Endothelial cell of umbilical vein (primary cell): ENCODE measurements at regions of chr1 and their contacts with region 1.

Region 1: DNA sequence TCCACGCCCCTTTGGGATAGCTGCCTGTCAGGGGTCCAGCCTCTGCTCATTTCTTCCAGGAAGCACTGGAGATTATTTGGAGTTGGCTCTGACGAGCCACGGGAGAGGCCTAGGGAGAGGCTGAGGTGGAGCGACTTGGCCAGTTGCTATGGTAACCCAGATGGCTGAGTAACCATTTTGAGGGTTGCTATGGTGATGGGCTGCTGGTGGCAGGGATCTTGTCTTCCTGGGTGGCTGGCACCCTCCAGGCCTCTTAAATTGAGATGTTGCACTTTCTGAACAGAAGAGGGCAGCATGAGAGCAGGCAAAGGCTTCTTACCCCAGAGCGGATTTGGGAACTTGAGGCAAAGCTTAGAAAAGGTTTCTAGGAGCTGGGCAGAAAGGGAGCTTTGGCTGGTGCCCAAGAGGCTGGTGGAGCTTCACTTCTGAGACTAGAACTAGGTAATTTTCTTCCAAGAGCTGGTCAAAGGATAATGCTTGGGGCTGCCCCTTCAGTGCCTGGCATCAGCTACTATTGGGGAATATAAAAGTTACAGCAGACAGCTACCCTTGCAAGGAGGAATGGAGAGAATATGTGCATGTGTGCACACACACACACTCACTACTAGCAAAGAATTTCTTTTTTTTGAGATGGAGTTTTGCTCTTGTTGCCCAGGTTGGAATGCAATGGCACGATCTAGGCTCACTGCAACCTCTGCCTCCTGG is 72.5 kb downstream of the NDUFS5 start:
- DNase-seq: peak; percentile 61
- H3K4me3 ChIP-seq: no peak overlapping the region
- H3K27ac ChIP-seq: no peak overlapping the region
- H3K4me1 ChIP-seq: peaks cover 12% of the 10 kb centered on the region
- H3K27me3 ChIP-seq: no peaks in the 10 kb centered on the region
- CTCF ChIP-seq: peak; percentile 65 to 68
- POLR2A ChIP-seq: no peak

Region 2: GRCh38 chr1:37989361-37989930 is 1109.3 kb before region 1 on chr1:
- CTCF ChIA-PET with region 1: no interaction called
- POLR2A ChIA-PET with region 1: no interaction called
- dilution Hi-C with region 1: no loop called
- intact Hi-C with region 1: no loop called
- DNase-seq: no peak
- H3K4me3 ChIP-seq: peak overlapping the region; percentile 78 to 81 (median 78)
- H3K27ac ChIP-seq: peak overlapping the region; percentile 24
- H3K4me1 ChIP-seq: peaks cover 9% of the 10 kb centered on the region
- H3K27me3 ChIP-seq: no peaks in the 10 kb centered on the region
- CTCF ChIP-seq: no peak
- POLR2A ChIP-seq: no peak

Region 3: GRCh38 chr1:38640371-38640770 is 458.3 kb before region 1 on chr1:
- CTCF ChIA-PET with region 1: no interaction called
- POLR2A ChIA-PET with region 1: no interaction called
- dilution Hi-C with region 1: no loop called
- intact Hi-C with region 1: no loop called
- DNase-seq: no peak
- H3K4me3 ChIP-seq: no peak overlapping the region
- H3K27ac ChIP-seq: no peak overlapping the region
- H3K4me1 ChIP-seq: no peaks in the 10 kb centered on the region
- H3K27me3 ChIP-seq: no peaks in the 10 kb centered on the region
- CTCF ChIP-seq: no peak
- POLR2A ChIP-seq: no peak

Region 4: DNA sequence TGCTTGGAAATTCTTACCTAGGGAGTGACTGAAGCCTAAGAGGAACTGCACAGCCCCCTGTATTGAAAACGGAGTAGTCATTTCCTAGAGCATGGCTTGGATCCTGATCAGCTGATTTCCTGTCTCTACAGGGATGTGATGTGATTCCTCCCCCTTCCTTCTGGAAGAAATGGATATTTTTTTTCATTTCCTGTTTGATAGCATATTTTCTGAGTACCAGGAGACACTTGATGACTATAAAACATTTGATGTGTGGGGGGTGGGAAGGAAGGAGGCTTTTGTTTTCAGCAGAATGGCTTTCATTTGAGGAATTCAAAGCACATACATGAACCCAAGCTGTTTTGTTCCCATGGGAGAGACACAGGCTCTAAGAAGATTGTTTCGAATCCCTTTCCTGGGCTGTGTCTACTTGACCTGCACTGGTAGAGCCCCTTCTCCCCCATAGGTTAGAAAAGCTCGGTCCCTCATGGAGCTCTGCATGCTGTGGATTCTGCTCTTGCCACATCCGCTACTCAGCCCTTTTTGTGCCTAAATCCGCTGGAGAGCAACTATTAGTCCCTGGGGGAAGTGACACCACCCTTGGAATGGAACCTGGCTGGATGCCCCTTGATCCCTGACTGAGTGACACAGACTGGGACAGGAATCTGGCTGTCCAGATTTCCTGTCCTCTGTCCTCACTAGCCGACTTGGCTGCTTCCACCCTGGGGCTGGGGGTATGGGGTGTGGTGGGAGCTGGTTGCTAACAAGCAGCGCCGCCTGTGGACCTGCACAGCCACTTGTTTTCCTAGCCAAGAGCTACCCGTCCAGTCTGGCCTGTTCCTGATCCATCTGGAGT is 34.0 kb after region 1 on chr1:
- CTCF ChIA-PET with region 1: interaction called, 35 read pairs
- POLR2A ChIA-PET with region 1: no interaction called
- dilution Hi-C with region 1: no loop called
- intact Hi-C with region 1: no loop called
- DNase-seq: peak; percentile 97
- H3K4me3 ChIP-seq: peak overlapping the region in 1 of 3 experiments; percentile 38
- H3K27ac ChIP-seq: peak overlapping the region; percentile 98
- H3K4me1 ChIP-seq: peaks cover 68% of the 10 kb centered on the region
- H3K27me3 ChIP-seq: no peaks in the 10 kb centered on the region
- CTCF ChIP-seq: peak; percentile 68 to 75
- POLR2A ChIP-seq: peak; percentile 32

Region 5: DNA sequence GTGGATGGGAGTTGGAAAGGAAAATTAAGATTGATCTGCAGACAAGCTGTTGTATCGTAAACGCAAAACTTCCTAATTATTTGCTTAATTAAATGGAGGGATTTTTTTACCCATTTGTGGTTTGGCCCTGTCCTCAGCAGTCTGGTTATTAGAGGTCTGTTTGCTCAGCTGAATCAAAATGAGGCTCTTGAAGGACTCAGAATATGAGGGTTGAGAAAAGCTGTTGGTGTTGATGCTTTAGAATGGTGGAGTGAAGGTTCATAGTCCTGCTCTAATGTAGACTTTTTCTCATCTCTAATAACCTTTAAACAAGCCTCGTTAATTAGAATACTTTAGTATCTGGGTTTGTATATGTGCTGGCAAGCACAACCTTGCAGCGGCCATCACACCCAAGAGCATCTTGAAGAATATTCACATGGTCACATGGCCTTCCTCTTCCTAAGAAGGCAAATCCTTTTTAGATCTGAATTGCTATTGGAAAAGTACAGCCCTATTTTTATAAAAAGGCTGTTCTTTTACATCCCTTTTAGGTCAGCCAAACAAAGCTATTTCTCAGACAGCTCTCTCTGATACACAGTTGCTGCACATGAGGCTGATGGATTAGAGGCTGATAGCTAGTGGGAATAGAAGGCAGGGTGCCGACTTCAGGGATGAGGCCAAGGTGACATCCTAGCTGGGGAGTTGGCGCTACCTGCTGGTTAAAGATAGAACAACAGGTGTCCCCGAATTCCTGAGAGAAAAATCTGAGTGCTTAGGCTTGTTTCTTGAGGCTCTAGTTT is 159.6 kb after region 1 on chr1:
- CTCF ChIA-PET with region 1: interaction called, 44 read pairs
- POLR2A ChIA-PET with region 1: no interaction called
- dilution Hi-C with region 1: no loop called
- intact Hi-C with region 1: loop called (anchors 1 kb)
- DNase-seq: peak; percentile 75
- H3K4me3 ChIP-seq: no peak overlapping the region
- H3K27ac ChIP-seq: no peak overlapping the region
- H3K4me1 ChIP-seq: no peaks in the 10 kb centered on the region
- H3K27me3 ChIP-seq: no peaks in the 10 kb centered on the region
- CTCF ChIP-seq: peak; percentile 70 to 71
- POLR2A ChIP-seq: no peak

Region 6: DNA sequence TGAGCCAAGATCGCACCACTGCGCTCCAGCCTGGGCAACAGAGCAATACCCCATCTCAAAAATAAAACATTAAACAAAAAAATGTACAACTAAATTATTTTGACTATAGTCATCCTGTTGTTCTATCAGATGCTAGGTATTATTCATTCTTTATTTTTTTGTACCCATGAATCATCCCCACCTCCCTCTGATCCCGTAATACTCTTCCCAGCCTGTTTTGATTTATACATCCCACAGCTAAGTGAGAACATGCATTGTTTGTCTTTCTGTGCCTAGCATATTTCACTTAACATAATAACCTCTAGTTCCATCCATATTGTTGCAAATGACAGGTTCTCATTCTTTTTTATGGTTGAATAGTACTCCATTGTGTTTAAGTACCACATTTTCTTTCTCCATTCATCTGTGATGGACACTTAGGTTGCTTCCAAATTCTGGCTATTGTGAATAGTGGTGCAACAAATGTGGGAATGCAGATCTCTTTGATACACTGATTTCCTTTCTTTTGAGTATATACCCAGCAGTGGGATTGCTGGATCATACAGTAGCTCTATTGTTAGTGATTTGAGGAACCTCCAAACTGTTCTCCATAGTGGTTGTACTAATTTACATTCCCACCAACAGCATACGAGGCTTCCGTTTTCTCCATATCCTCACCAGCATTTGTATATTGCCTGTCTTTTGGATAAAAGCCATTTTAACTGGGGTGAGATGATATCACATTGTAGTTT is 190.2 kb after region 1 on chr1:
- CTCF ChIA-PET with region 1: interaction called, 10 read pairs
- POLR2A ChIA-PET with region 1: no interaction called
- dilution Hi-C with region 1: no loop called
- intact Hi-C with region 1: no loop called
- DNase-seq: no peak
- H3K4me3 ChIP-seq: no peak overlapping the region
- H3K27ac ChIP-seq: no peak overlapping the region
- H3K4me1 ChIP-seq: no peaks in the 10 kb centered on the region
- H3K27me3 ChIP-seq: no peaks in the 10 kb centered on the region
- CTCF ChIP-seq: no peak
- POLR2A ChIP-seq: no peak

Region 7: DNA sequence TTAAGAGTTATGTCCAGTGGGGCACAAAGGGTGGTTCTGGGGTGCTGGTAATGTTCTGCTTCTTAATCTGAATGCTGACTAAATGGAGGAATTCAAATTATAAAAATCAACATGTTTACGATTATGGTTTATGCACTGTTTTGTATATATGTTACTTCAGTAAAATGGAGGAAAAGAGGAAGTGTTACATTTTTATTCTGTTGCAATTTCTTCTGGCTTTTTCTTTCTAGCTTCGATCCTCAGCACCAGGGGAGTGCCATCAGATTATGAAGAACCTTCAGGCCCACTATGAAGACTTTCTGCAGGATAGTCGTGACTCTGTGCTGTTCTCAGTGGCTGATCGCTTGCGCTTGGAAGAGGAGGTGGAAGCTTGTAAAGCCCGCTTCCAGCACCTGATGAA is 211.3 kb after region 1 on chr1:
- CTCF ChIA-PET with region 1: interaction called, 12 read pairs
- POLR2A ChIA-PET with region 1: no interaction called
- dilution Hi-C with region 1: no loop called
- intact Hi-C with region 1: no loop called
- DNase-seq: no peak
- H3K4me3 ChIP-seq: no peak overlapping the region
- H3K27ac ChIP-seq: no peak overlapping the region
- H3K4me1 ChIP-seq: no peaks in the 10 kb centered on the region
- H3K27me3 ChIP-seq: no peaks in the 10 kb centered on the region
- CTCF ChIP-seq: no peak
- POLR2A ChIP-seq: no peak

Region 8: DNA sequence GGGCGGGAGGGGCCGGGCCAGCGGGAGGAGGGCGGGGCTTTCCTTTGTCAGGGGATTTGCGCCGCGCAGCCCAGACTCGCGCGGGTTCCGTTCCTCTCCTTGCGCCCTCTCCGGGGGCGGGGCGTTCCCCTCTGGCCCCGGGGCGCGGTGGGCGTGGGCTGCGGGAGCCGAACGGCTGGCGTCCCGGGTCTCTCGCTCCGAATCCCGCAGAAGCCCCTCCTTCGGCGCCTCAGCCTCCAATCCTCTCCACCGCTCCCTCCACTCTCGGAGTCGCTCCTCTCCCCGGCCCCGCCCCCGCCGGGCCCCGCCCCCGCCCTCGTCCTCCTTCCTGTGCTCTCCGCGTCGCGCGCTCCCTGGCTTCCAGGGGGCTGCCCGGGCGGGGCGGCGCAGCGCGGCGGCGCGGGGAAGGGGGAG is 309.9 kb after region 1 on chr1:
- CTCF ChIA-PET with region 1: interaction called, 20 read pairs
- POLR2A ChIA-PET with region 1: no interaction called
- dilution Hi-C with region 1: no loop called
- intact Hi-C with region 1: loop called (anchors 2 kb)
- DNase-seq: peak; percentile 97
- H3K4me3 ChIP-seq: peak overlapping the region; percentile 67 to 97 (median 96)
- H3K27ac ChIP-seq: peak overlapping the region; percentile 79
- H3K4me1 ChIP-seq: peaks cover 54% of the 10 kb centered on the region
- H3K27me3 ChIP-seq: no peaks in the 10 kb centered on the region
- CTCF ChIP-seq: no peak
- POLR2A ChIP-seq: peak; percentile 4

Region 9: DNA sequence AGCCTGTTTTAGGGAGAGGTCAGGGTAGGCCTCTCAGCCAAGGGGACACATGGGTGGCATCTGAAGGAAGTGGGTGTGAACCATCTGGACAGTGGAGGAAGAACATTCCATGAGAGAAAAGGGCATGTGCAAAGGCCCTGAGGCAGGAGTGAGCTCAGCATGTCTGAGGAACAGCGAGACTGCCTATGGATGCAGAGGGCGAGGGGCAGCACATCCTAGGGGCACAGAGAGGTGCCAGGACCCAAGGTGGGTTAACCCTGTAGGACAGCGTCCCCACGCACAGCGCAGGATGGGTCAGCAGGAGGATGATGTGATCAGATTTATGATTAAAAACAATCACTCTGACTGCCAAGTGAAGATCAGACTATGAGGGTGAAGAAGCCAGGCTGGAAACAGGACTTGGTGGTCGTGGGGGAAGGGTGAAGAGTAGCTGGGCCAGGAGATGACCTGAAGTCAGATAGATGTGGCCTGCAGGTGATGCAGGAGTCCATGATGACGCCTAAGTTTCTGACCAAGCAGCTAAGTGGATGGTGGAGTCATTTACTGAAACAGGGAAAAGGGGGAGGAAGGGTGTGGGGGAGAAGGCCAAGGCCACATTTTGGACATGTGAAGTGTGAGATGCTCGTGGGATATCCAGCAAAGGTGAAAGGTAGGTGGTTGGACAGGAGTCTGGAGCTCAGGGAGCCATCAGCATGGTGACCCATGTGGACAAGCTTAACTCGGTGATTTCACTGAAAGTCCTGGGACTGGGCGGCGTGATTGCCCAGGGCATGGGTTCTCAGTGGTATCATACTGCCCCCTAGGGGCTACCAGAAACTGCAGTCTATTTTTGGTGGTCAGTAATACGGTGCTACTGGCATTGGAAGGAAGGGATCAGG is 440.1 kb after region 1 on chr1:
- CTCF ChIA-PET with region 1: interaction called, 99 read pairs
- POLR2A ChIA-PET with region 1: no interaction called
- dilution Hi-C with region 1: no loop called
- intact Hi-C with region 1: loop called (anchors 1 kb)
- DNase-seq: peak; percentile 75
- H3K4me3 ChIP-seq: no peak overlapping the region
- H3K27ac ChIP-seq: no peak overlapping the region
- H3K4me1 ChIP-seq: no peaks in the 10 kb centered on the region
- H3K27me3 ChIP-seq: no peaks in the 10 kb centered on the region
- CTCF ChIP-seq: peak; percentile 85 to 87
- POLR2A ChIP-seq: no peak